Activated naive CD4-positive, alpha-beta T cell treated with anti-CD3 and anti-CD28 coated beads, Interleukin-2, amount 10 ng/mL, durations not matched to agents 7 days and 5 days (primary cell): ENCODE measurements at regions of chr11 and their contacts with region 1.

Region 1: DNA sequence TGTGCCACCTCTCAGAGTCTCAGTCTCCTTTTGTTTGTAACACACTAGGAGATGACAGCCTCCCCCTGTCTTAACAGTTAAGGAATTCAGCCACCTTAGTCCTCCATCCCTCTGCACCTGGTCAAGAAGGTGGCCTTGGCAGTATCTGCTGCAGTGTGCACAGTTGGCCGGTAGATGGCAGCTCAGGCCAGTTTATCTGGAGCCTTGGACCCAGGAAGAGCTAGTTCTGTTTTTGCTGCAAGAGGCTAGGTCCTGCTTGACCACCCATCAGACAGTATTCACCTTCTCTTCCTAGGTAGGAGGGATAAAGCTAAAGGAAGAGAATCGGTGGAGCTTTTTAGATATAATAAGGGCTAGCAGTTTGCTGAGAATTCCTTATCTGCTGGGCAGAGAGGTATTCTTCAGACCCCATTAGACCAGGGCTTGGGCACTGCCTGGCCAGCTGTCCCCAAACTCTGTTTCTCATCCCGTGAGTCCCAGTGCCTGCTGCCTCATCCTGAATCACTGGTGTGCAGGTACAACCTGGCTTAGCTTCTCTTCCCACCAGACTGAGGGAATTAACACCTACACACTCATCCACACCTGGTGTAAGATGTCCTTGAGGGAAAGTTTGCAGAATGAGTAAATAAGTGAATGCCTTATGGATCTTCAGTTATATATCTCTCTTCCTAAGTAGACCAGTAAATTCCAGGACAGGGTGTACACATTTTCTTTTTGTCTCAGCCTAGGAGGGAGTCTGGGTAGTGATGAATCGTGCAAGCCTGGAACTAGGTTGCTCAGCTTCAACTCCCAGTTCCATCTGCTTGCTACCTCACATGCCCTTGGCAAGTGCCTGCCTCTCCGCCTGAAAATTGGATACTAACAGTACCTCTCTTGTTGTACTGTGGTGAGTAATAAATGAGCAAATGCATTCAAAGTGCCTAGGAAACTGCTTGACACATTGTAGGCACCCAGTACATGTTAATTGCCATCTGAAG is 70.8 kb upstream of the NARS2 start:
- DNase-seq: peak; percentile 71
- H3K4me3 Mint-ChIP-seq: no peak overlapping the region
- H3K27ac Mint-ChIP-seq: no peak overlapping the region
- H3K4me1 Mint-ChIP-seq: peaks cover 11% of the 10 kb centered on the region
- H3K27me3 Mint-ChIP-seq: peaks cover 14% of the 10 kb centered on the region

Region 2: DNA sequence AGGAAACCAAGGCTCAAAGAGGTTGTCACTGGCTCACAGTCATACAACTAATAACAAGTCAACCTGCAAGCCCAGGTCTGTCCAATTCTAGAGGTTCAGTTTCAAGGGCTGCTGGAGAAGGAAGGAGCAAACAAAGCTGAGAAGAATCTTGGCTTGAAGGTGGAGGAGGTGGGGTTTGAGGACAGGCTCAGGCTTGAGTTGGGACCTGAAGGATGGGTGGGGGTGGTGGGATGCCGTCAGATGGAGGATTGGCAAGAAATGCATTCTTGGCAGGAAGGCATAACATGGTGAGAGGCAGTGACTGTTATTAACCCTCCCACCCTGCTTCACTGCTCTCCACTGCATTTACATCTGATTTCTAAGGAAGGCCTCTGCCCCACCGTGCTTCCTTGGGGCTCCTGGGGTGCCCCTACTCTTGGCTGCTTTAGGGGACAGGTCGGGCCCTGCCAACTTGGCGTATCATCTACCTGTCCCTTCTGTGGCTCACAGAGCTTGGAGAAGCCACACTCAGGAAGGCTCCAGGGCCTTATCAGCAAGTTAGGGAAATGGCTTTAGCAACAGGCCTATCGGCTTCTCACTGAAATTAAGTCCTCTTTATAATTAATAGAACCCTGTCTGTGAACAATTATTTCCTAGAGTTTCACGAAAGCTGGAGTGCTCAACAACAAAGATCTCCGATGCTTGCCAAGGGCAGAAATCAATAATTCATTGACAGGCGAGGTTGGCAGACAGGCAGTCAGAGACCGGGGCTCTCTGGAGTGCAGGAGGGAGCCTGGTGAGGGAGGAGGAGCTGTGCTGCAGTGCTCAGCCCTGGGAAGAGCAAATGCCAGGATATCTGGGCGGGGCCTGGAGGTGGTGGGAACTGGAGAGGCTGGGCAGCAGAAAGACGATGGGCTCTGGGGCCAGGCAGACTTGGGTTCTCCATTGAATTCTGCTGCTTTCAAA is 14.1 kb after region 1 on chr11:
- CTCF ChIA-PET with region 1: interaction called, 24 read pairs
- DNase-seq: no peak
- H3K4me3 Mint-ChIP-seq: no peak overlapping the region
- H3K27ac Mint-ChIP-seq: no peak overlapping the region
- H3K4me1 Mint-ChIP-seq: no peaks in the 10 kb centered on the region
- H3K27me3 Mint-ChIP-seq: peaks cover 17% of the 10 kb centered on the region

Region 3: DNA sequence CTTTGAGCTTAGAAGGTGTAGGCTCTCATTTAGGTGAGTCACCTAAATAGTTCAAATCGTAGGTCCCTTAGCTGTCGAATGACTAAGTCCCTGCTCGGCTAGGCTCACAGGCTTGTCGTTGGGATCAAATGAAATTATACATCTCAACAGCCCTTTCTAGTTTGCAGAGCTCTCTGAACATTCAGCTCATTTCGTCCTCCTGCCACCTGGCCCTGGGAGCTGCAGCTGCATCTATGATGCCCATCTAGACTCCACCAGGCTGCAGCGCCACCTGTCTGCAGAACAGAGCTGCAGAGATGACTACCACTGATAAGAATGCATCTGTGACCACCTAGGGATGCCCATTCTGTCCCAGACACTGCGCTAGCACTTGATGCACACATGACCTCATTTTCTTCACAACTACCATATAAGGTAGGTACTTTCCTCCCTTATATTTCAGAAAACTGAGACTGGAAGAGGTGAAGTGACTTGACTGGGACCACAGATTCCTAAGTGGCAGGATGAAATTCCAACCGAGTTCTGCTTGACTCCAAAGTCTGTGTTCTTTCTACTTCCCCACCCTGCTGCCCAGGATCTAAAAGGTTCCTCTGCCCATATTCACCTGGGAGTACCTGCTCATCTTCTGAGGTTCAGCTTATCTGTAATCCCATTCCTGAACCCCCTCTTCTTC is 70.3 kb after region 1 on chr11:
- CTCF ChIA-PET with region 1: interaction called, 160 read pairs
- DNase-seq: peak; percentile 59
- H3K4me3 Mint-ChIP-seq: no peak overlapping the region
- H3K27ac Mint-ChIP-seq: no peak overlapping the region
- H3K4me1 Mint-ChIP-seq: no peaks in the 10 kb centered on the region
- H3K27me3 Mint-ChIP-seq: peaks cover 6% of the 10 kb centered on the region

Region 4: DNA sequence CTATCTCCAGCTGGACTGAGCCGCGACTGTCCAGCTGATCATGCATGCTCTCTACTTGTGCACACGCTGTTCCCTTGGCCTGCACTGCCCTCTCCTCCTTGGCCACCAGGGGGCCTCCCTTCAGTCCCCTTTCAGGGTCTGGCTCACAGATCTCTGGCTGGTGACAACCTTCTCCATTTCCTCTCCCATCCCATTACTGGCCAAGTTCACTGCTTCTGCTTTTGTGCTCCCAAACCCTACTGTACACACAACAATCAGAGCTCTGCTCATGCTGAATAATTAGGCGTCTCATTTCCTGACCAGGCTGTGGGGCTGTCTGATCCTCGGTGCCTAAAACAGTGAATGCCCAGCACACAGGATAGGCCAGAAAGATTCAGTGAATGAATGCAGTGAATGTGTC is 153.1 kb after region 1 on chr11:
- CTCF ChIA-PET with region 1: interaction called, 13 read pairs
- DNase-seq: peak; percentile 55
- H3K4me3 Mint-ChIP-seq: no peak overlapping the region
- H3K27ac Mint-ChIP-seq: no peak overlapping the region
- H3K4me1 Mint-ChIP-seq: no peaks in the 10 kb centered on the region
- H3K27me3 Mint-ChIP-seq: peaks cover 12% of the 10 kb centered on the region

Region 5: DNA sequence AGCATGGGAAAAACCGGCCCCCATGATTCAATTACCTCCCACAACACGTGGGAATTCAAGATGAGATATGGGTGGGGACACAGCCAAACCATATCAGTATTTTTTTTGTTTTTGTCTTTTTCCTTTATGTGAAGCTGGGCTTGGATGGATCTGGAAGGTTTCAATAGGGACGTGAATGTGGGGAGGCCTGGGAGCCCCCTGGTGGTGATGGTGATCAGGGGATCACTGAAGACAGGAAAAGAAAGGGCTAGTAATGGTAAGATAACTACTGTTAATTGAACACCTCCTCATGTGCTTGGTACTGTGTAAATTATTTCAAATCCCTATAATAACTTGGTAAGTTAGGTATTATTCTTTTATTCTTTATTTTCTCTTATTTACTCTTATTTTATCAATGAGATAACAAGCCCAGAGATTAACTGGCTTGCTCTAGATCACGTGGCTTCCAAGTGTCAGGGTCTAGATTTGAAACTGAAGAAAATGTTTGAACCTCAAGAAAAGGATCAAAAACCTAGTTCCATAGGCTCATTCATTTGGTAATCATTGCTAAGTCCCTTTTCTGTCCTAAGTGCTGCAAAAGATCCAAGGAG is 431.1 kb after region 1 on chr11:
- CTCF ChIA-PET with region 1: interaction called, 10 read pairs
- DNase-seq: peak; percentile 38
- H3K4me3 Mint-ChIP-seq: no peak overlapping the region
- H3K27ac Mint-ChIP-seq: no peak overlapping the region
- H3K4me1 Mint-ChIP-seq: no peaks in the 10 kb centered on the region
- H3K27me3 Mint-ChIP-seq: peaks cover 5% of the 10 kb centered on the region

Region 6: GRCh38 chr11:79100093-79100910 is 454.8 kb after region 1 on chr11:
- CTCF ChIA-PET with region 1: interaction called, 44 read pairs
- DNase-seq: peak; percentile 47
- H3K4me3 Mint-ChIP-seq: no peak overlapping the region
- H3K27ac Mint-ChIP-seq: no peak overlapping the region
- H3K4me1 Mint-ChIP-seq: no peaks in the 10 kb centered on the region
- H3K27me3 Mint-ChIP-seq: peaks cover 3% of the 10 kb centered on the region

Region 7: DNA sequence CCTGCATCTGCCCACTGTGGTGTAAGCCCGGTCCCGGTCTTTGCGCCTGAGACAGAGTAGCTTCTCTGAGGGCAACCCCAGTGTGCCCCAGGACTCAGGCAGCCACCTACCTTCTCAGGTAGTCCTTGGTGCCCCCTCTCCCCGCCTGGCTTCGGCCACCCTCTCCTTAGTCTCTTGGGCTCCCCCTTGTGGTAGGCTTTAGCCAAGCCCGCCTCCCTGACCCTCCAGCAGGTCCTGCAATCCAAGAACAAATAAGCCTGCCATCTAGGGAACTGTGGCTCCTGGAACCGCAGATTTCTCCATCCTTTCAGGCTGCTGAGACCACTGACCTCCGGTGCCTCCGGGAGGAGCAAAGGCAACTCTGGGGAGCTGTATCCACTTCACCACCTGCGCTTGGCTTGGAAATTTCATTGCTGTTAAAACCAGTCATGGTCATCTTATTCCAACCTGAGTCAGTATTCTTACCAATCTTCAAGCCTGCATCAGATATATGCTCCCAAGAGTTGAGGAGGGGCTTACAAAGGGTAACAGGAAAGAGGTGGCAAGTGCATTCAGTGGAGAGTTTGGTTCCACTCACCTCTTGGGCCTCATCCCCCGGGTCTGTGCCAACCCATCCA is 848.1 kb after region 1 on chr11:
- CTCF ChIA-PET with region 1: interaction called, 13 read pairs
- DNase-seq: peak; percentile 53
- H3K4me3 Mint-ChIP-seq: no peak overlapping the region
- H3K27ac Mint-ChIP-seq: no peak overlapping the region
- H3K4me1 Mint-ChIP-seq: no peaks in the 10 kb centered on the region
- H3K27me3 Mint-ChIP-seq: no peaks in the 10 kb centered on the region